ENCODE measurements at regions of chr4 and their contacts with region 1.

Region 1: DNA sequence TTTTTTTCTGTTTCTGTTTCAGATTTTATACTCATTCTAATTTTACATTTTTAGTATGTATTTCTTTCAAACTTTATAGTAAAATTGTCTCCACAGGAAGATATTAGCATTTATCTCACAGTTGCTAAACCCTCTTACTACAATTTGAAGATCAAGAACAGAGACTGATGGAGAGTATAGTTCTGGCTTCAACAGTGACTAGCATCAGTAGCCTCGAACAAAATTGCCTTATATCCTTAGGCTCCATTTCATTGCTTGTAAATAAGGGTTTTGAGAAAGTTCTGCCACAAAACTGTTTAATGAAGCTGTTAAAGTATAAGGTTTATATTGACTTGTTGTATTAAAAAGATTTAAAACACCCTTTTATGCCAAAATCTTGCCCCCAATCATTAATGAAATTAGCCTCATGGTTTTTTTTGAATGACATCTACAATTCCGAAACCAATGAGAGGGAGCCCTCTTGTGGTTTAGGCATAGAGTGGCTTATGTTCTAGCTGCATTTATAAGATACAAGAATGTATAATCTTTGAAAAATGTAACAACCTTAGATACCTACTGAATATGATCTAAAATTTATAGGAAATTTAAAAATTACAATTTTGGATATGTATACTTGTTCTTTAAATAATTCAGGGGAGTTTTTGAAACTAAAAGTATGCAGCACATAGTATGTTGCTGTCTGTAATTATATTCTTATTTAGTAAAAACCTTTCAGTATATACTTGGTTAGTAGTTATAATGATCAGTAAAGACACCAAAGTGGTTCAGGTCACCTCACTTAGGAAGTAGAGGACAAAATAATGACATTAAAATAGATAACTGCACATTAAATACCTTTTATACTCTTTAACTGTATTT is 109.8 kb upstream of the HPGD start:
- DNase-seq: peak in 2 of 5 donors; percentile 62 to 77
- H3K4me3 ChIP-seq: no peak overlapping the region
- H3K27ac ChIP-seq: no peak overlapping the region
- H3K4me1 ChIP-seq: no peaks in the 10 kb centered on the region
- H3K27me3 ChIP-seq: no peaks in the 10 kb centered on the region
- CTCF ChIP-seq: peak; percentile 72

Region 2: DNA sequence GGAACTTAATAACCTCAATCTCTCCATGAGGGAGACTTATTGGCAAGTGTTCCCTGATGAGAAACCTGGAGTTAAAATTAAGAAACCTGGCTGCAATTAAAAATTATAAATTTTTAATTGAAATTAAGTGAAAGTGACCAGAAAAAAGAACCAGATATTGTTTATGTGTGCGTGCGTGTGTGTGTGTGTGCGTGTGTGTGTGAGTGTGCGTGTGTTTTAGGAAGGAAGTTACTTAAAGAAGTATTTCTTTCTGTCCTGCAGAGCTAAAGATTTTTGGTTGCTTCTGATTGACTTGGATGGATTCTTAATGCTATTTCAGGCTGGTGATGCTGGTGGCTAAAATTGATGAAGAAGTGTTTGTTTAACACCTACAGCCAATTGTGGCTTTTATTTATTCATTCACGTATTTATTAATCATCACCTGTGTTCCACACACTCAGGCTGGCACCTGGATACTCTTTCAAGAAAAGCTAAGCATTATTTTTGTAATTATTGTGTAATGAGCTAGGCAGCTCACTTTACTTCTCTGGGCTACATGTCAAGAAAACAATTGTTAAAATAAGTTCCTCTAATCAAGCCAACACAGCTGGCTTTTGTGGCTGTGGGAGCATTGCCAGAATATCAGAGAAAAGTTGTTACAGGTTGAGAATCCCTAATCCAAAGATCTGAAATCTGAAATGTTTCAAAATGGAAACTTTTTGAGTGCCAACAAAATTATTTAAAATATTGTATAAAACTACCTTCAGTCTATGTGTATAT is 279.9 kb before region 1 on chr4:
- intact Hi-C with region 1: no loop called
- DNase-seq: no peak
- H3K4me3 ChIP-seq: no peak overlapping the region
- H3K27ac ChIP-seq: no peak overlapping the region
- H3K4me1 ChIP-seq: no peaks in the 10 kb centered on the region
- H3K27me3 ChIP-seq: no peaks in the 10 kb centered on the region
- CTCF ChIP-seq: no peak

Region 3: GRCh38 chr4:174365018-174365587 is 267.0 kb before region 1 on chr4:
- intact Hi-C with region 1: loop called (anchors 10 kb)
- DNase-seq: peak in 2 of 5 donors; percentile 60 to 67
- H3K4me3 ChIP-seq: no peak overlapping the region
- H3K27ac ChIP-seq: no peak overlapping the region
- H3K4me1 ChIP-seq: no peaks in the 10 kb centered on the region
- H3K27me3 ChIP-seq: no peaks in the 10 kb centered on the region
- CTCF ChIP-seq: peak; percentile 54